Left lung (tissue), 14 donors: ENCODE measurements at regions of chr3 and their contacts with region 1.

Region 1: DNA sequence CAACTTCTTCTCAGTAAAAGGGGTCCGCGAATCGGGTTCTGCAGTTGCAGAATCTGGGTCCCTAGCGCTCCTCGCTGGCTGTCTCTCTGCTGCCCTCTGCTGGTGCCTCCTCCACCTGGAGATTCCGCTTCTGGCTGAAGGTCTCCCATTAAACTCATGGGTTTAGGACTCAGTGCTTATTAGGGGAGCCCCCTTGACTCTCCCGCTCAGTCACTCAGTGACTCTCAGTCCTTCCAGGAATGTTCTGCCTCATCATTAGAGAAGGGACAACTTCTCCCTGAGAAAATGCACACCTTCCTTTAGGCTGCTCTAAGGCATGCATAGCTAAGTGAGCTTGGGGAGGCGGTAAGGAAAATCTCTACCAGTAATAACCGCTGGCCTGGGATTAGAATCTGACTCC is 7.1 kb downstream of the CPN2 start:
- DNase-seq: peak in 3 of 4 donors; percentile 67 to 82 (median 76)
- ATAC-seq: peak; percentile 86
- H3K4me3 ChIP-seq: no peak overlapping the region
- H3K27ac ChIP-seq: no peak overlapping the region
- H3K4me1 ChIP-seq: no peaks in the 10 kb centered on the region
- H3K27me3 ChIP-seq: peaks cover 0 to 28% of the 10 kb centered on the region in 2 donors
- CTCF ChIP-seq: peak; percentile 87 to 95

Region 2: GRCh38 chr3:194095464-194095863 is 248.5 kb before region 1 on chr3:
- intact Hi-C with region 1: no loop called
- DNase-seq: peak in 2 of 4 donors; percentile 60 to 64
- ATAC-seq: peak; percentile 47
- H3K4me3 ChIP-seq: no peak overlapping the region
- H3K27ac ChIP-seq: no peak overlapping the region
- H3K4me1 ChIP-seq: peaks cover 5 to 32% of the 10 kb centered on the region in 2 donors
- H3K27me3 ChIP-seq: no peaks in the 10 kb centered on the region
- CTCF ChIP-seq: no peak

Region 3: DNA sequence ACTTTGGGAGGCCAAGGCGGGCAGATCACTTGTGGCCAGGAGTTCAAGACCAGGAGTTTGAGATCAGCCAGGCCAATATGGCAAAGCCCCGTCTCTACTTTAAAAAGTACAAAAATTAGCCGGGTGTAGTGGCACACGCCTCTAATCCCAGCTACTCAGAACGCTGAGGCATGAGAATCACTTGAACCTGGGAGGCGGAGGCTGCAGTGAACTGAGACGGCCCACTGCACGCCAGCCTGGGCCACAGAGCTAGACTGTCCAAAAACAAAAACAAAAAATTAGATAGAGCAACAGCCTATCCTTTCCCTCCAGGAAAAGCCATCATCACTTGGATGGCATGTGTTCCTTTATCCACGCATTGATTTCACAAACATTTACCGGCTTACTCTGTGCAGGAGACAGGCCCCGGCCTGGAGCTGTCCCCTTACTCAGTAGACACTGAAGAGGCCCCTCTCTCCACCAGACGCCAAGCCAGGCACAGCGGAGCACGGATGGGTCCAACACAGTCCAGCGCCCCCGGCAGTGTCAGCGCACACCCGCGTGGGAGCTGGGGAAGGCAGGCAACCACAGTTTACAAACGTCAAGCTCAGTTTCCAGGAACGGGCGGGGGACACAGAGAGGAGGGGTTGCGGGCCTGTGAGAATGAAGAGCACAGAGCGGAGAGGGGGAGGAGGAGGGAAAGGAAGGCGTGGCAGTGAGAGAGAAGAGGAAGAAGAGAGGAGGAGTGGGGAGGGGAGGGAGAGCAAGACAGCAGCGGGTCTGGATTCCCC is 52.0 kb after region 1 on chr3:
- intact Hi-C with region 1: loop called in 1 of 2 experiments (anchors 5 kb)
- DNase-seq: peak; percentile 36 to 76 (median 54)
- ATAC-seq: peak; percentile 76
- H3K4me3 ChIP-seq: peak overlapping the region in 1 of 2 donors; percentile 11
- H3K27ac ChIP-seq: no peak overlapping the region
- H3K4me1 ChIP-seq: peaks cover 6 to 23% of the 10 kb centered on the region in 2 donors
- H3K27me3 ChIP-seq: peaks cover 19 to 78% of the 10 kb centered on the region in 2 donors
- CTCF ChIP-seq: no peak

Region 4: DNA sequence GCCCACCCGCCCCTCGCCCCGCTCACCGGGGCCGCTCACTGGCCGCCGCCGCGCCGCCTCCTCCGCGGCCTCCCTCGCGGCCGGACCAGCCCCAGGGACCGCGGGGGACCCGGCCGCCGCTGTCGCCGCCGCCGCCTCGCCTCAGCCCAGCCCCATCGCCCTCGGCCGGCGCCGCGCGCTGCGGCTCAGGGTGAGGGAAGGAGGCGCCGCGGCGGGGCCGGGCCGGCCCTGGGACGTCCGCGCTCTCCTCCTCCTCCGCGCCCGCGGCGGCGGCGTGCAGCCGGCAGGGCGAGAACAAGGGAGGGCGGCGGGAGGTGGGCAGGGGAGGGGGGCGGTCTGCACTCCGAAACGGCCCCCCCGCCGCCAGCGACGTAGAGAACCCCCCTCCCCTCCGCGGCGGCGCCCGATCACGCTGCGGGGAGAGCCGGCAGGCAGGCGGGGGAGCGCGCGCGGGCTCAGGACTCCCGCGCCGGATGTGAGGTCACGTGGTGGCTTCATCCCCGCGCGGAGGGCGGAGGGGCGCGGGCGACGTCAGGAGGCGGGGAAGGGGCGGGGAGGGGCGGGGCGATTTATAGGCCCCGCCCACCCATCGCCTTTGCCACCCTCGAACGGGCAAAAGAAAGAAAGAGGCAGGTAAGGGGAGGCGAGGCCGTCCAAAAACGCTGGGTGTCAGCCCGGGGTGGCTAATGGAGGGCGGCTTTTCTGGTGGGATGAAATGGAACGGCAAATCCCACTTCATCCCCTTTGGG is 142.7 kb after region 1 on chr3 and contains the start of gene ATP13A3:
- intact Hi-C with region 1: no loop called
- DNase-seq: peak; percentile 84 to 97 (median 92)
- ATAC-seq: peak; percentile 90
- H3K4me3 ChIP-seq: peak within 1 kb of the TSS; percentile 66 to 68
- H3K27ac ChIP-seq: peak within 1 kb of the TSS; percentile 83 to 87
- H3K4me1 ChIP-seq: peaks cover 5 to 79% of the 10 kb centered on the region in 2 donors
- H3K27me3 ChIP-seq: no peaks in the 10 kb centered on the region
- CTCF ChIP-seq: no peak
- polyA plus RNA-seq, gene ATP13A3: 52.0 to 65.1 (median 56.7) TPM